T-cell (primary cell): ENCODE measurements at regions of chr2 and their contacts with region 1.

Region 1: DNA sequence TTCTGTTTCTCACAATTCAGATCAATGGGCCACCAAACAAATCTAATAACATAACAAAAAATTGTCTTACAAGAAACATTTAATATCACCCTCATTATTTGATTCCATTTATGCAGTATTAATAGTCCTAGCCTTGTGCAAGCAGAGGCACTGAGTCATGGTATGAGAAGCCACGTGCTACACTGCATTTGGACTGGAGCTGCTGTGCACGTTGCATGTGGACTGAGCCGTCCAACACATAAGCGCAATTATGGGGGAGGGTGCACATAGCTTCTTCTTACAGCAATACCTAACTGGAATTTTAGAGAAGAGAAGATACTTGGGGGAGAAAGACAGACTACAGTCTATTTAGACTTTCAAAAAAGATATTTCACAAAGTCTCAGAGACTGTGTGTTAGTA is 329.6 kb upstream of the ID2 start:
- DNase-seq: no peak
- ATAC-seq: no peak
- H3K4me3 ChIP-seq: no peak overlapping the region
- H3K4me3 Mint-ChIP-seq: no peak overlapping the region
- H3K27ac ChIP-seq: no peak overlapping the region
- H3K27ac Mint-ChIP-seq: no peak overlapping the region
- H3K4me1 ChIP-seq: peaks cover 0 to 2% of the 10 kb centered on the region in 2 experiments
- H3K4me1 Mint-ChIP-seq: no peaks in the 10 kb centered on the region
- H3K27me3 ChIP-seq: no peaks in the 10 kb centered on the region
- H3K27me3 Mint-ChIP-seq: no peaks in the 10 kb centered on the region

Region 2: GRCh38 chr2:8251291-8251690 is 101.0 kb before region 1 on chr2:
- CTCF ChIA-PET with region 1: no interaction called
- POLR2A ChIA-PET with region 1: interaction called in 1 of 2 experiments, 10 read pairs
- DNase-seq: no peak
- ATAC-seq: no peak
- H3K4me3 ChIP-seq: no peak overlapping the region
- H3K4me3 Mint-ChIP-seq: no peak overlapping the region
- H3K27ac ChIP-seq: no peak overlapping the region
- H3K27ac Mint-ChIP-seq: no peak overlapping the region
- H3K4me1 ChIP-seq: peaks cover 0 to 3% of the 10 kb centered on the region in 2 experiments
- H3K4me1 Mint-ChIP-seq: peaks cover 9 to 14% (median 13%) of the 10 kb centered on the region in 3 donors
- H3K27me3 ChIP-seq: no peaks in the 10 kb centered on the region
- H3K27me3 Mint-ChIP-seq: no peaks in the 10 kb centered on the region